Sciatic nerve (tissue), 2 donors: ENCODE measurements at regions of chr14 and their contacts with region 1.

Region 1: GRCh38 chr14:92426191-92426590 is 87.4 kb upstream of the RIN3 start:
- DNase-seq: no peak
- ATAC-seq: no peak

Region 2: GRCh38 chr14:92386637-92387036 is 39.6 kb before region 1 on chr14:
- intact Hi-C with region 1: loop called (anchors 2 kb)
- DNase-seq: no peak
- ATAC-seq: no peak

Region 3: DNA sequence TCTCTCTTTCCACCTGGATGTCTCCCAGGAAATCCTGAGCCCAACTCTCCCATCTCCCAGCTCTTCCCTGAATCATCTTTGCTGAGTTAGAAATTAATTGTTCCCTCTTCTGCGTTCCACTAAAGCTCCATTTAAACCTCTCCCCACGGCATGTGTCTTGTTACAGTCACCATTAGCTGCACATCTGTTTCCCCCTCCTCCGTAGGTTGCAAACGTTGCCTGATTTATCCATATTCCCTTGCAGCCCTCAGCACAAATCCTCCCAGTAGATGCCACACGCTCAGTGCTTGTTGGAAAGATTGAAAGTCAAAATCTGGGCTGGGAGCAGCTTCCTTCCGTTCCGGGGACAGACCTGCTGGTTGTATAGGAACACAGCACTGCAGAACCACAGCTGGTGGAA is 12.8 kb before region 1 on chr14:
- intact Hi-C with region 1: no loop called
- DNase-seq: no peak
- ATAC-seq: no peak